Tibial artery (tissue), 4 donors: ENCODE measurements at regions of chr20 and their contacts with region 1.

Region 1: DNA sequence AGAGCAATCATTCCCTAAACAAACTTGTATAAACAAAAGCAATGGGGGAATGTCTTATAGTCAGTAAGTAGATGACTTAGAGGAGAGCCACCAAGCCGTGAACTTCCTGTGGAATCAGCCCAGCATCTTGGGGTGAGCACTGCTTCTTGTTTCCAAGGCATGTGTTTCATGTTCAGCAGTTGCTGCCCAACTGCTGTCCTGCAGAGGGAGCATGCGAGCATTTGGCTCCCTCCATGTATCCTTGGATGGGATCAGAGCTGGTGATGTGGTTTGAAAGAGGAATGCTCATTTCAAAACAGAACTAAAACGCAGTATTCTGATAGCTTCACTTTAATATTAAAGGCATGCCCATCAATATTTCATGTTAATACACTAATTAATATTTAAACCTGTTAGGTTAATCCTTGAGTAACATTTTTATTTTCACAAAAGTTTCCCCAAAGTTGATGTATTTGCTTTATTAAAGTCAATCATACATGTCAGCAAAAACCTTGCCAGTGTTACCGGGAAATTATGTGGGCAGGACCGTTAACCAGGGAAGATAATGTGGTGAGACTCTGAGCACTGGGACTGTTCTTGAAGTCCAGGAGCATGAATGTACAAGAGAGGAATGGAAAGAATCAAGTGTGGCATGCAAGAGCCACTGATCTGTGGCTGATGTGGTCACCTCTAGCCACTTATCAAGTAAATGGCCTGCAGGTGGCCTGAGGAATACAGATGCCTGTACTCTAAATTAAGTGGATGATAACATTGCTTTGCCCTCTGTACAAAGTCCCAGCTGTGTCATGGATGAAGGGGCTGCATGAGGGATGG is 172.2 kb upstream of the GGTLC1 start:
- DNase-seq: peak; percentile 60 to 76
- H3K4me3 ChIP-seq: no peak overlapping the region
- H3K27ac ChIP-seq: no peak overlapping the region
- H3K4me1 ChIP-seq: peaks cover 0 to 4% (median 0%) of the 10 kb centered on the region in 4 donors
- H3K27me3 ChIP-seq: peaks cover 0 to 4% of the 10 kb centered on the region in 2 donors
- CTCF ChIP-seq: peak; percentile 79

Region 2: GRCh38 chr20:24808616-24809015 is 647.8 kb after region 1 on chr20:
- intact Hi-C with region 1: loop called (anchors 10 kb)
- DNase-seq: no peak
- H3K4me3 ChIP-seq: no peak overlapping the region
- H3K27ac ChIP-seq: no peak overlapping the region
- H3K4me1 ChIP-seq: no peaks in the 10 kb centered on the region
- H3K27me3 ChIP-seq: peaks cover 0 to 10% of the 10 kb centered on the region in 2 donors
- CTCF ChIP-seq: no peak

Region 3: DNA sequence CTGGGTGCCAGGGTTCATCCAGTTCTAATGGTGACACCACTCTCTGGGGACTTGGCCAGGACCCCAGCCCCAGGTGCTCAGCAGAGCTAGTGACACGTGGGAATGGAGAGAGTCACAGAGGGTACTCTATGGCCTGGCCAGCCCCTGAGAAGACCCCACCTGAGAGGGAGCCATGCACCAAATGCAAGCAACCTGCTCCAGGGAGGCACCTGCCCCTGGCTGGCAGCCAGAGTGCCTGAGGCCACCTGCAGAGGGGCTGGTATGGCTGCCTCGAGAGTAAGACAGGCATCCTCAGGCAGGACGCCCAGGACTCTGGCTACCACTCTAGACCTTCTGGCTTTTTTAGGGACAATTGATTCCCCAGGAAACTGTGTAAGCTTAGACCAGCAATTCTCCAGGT is 749.7 kb after region 1 on chr20:
- intact Hi-C with region 1: loop called (anchors 5 kb)
- DNase-seq: no peak
- H3K4me3 ChIP-seq: no peak overlapping the region
- H3K27ac ChIP-seq: no peak overlapping the region
- H3K4me1 ChIP-seq: no peaks in the 10 kb centered on the region
- H3K27me3 ChIP-seq: no peaks in the 10 kb centered on the region
- CTCF ChIP-seq: no peak